ENCODE measurements at regions of chr2 and their contacts with region 1.

Region 1: DNA sequence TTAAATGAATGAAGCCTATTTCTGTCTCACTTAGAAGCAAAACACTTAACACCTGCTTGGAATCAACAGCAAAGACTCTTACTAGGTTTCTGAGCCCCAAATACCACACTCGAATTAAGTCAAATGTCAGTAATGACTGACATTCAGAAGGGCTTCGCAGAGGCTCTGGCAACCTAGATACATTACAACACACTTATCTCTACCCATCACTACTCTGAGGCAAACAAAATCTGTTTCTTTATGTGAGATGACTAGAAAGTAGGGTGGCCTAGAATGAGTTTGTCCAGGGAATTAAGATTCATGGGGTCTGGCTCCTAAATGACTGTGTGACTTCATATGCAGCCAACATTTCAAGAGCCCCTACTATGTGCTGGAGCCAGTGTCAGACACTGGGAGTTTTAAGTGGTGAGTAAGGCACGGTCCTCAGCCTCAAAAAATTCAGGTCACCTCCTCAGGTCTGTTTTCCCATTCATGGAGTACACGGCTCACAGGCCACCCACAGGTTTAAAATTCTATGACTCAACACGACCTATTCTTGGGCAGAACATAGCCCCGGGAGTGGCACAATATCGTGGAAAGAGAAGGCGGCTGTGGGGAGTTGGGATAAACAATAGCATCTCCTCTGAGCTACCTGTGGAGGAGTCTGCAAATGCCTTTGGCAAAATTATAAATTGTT is 150.3 kb upstream of the ZFP36L2 start:
- DNase-seq: no peak
- H3K4me3 ChIP-seq: no peak overlapping the region
- H3K4me3 Mint-ChIP-seq: peak overlapping the region; percentile 39
- H3K27ac Mint-ChIP-seq: peak overlapping the region; percentile 81
- H3K4me1 ChIP-seq: peaks cover 40% of the 10 kb centered on the region
- H3K4me1 Mint-ChIP-seq: peaks cover 44% of the 10 kb centered on the region
- H3K27me3 ChIP-seq: no peaks in the 10 kb centered on the region
- H3K27me3 Mint-ChIP-seq: no peaks in the 10 kb centered on the region
- CTCF ChIP-seq: no peak

Region 2: GRCh38 chr2:43389581-43390466 is 13.2 kb after region 1 on chr2:
- CTCF ChIA-PET with region 1: no interaction called
- POLR2A ChIA-PET with region 1: no interaction called
- intact Hi-C with region 1: loop called (anchors 1 kb)
- DNase-seq: peak in 1 of 2 experiments; percentile 60
- H3K4me3 ChIP-seq: no peak overlapping the region
- H3K4me3 Mint-ChIP-seq: peak overlapping the region; percentile 50
- H3K27ac Mint-ChIP-seq: peak overlapping the region; percentile 61
- H3K4me1 ChIP-seq: peaks cover 48% of the 10 kb centered on the region
- H3K4me1 Mint-ChIP-seq: peaks cover 47% of the 10 kb centered on the region
- H3K27me3 ChIP-seq: no peaks in the 10 kb centered on the region
- H3K27me3 Mint-ChIP-seq: no peaks in the 10 kb centered on the region
- CTCF ChIP-seq: no peak

Region 3: GRCh38 chr2:43402452-43402944 is 25.8 kb after region 1 on chr2:
- CTCF ChIA-PET with region 1: no interaction called
- POLR2A ChIA-PET with region 1: no interaction called
- intact Hi-C with region 1: no loop called
- DNase-seq: no peak
- H3K4me3 ChIP-seq: no peak overlapping the region
- H3K4me3 Mint-ChIP-seq: no peak overlapping the region
- H3K27ac Mint-ChIP-seq: no peak overlapping the region
- H3K4me1 ChIP-seq: peaks cover 31% of the 10 kb centered on the region
- H3K4me1 Mint-ChIP-seq: peaks cover 33% of the 10 kb centered on the region
- H3K27me3 ChIP-seq: no peaks in the 10 kb centered on the region
- H3K27me3 Mint-ChIP-seq: no peaks in the 10 kb centered on the region
- CTCF ChIP-seq: no peak

Region 4: GRCh38 chr2:43851011-43851980 is 474.6 kb after region 1 on chr2:
- CTCF ChIA-PET with region 1: no interaction called
- POLR2A ChIA-PET with region 1: no interaction called
- intact Hi-C with region 1: no loop called
- DNase-seq: no peak
- H3K4me3 ChIP-seq: no peak overlapping the region
- H3K4me3 Mint-ChIP-seq: no peak overlapping the region
- H3K27ac Mint-ChIP-seq: no peak overlapping the region
- H3K4me1 ChIP-seq: no peaks in the 10 kb centered on the region
- H3K4me1 Mint-ChIP-seq: no peaks in the 10 kb centered on the region
- H3K27me3 ChIP-seq: no peaks in the 10 kb centered on the region
- H3K27me3 Mint-ChIP-seq: peaks cover 13% of the 10 kb centered on the region
- CTCF ChIP-seq: no peak

Measured in Caco-2 (cell line).